Cardiac septum (tissue), 1 donor: ENCODE measurements at regions of chr15 and their contacts with region 1.

Region 1: DNA sequence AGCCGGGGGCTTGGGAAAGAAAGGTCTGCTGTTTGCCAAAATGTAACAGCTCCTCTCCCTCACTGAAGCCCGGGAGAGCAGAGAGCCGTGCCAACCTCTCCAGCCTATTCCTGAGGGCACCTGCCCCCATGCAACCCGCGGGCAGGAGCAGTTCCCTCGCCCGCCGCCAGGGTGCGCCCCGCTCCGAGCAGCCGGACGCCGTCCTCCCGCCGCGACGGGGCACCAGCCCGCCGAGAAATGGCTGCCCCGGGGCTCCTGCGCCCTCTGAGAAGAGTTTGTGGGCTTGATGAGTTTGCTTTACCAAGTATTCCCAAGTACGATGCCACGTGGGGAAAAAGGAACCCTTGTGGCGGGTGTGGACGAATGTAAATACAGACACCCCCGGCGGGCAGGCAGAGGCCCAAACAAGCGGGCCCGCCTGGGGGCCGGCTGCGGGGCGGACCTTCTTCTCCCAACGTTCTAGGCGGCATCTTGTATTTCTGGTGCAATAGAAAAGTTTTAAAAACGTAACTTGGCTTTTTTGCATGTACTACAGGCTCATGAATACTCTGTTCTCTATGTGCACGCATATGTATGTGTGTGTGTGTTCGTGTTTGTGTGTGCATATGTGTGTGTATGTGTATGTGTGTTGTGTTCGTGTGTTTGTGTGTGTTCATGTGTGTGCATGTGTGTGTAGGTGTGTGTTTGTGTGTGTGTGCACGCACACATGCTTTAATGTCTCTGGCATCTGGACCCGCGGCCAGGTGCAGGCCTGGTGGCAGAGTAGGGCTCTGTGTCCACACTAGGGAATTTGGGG is 162.9 kb downstream of the CHSY1 start:
- DNase-seq: peak; percentile 92

Region 2: DNA sequence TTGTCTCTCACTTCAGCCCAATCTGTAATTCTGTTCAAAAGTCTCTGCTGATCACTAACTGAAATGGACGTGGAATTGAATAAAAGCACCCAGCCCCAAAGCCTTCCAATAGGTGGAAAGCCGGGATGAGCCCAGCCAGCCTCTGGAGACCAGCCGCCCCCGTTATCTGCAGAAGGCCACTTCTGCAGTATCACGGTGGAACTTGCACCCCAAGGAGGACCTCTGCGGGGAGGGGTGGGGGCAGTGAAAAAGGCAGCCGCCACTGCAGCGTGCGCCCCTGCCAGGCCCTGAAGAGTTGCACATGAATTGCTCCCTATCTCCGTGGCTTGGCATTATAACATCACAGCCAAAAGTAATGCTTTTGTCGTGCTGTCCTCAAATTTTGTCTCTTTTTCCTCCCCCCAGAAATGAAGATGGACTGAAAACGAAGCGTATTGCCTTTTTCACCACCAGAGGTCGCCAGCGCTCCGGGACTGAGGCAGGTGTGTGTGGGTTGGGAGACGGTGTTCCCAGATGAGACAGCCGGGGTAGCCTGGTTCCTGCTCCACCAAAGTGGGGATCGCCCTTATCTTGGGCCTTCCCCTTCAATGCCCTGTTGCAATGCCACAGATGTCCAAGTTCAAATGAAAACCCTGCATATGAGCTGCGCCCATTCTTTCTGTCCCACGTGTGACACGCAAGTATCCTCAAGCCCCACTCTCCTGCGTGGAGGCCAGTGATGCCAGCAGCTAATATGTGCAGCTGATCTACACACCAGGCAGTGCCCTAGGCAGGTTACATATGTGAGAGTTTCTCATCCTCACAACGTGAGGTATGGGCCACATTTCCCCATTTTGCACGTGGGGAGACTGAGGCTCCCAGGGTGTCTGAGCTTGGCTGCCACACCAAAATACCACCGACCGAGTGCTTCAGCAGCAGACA is 73.8 kb before region 1 on chr15:
- intact Hi-C with region 1: loop called (anchors 5 kb)
- DNase-seq: peak; percentile 90

Region 3: GRCh38 chr15:101121511-101122090 is 32.6 kb after region 1 on chr15:
- intact Hi-C with region 1: loop called (anchors 2 kb)
- DNase-seq: peak; percentile 93

Region 4: DNA sequence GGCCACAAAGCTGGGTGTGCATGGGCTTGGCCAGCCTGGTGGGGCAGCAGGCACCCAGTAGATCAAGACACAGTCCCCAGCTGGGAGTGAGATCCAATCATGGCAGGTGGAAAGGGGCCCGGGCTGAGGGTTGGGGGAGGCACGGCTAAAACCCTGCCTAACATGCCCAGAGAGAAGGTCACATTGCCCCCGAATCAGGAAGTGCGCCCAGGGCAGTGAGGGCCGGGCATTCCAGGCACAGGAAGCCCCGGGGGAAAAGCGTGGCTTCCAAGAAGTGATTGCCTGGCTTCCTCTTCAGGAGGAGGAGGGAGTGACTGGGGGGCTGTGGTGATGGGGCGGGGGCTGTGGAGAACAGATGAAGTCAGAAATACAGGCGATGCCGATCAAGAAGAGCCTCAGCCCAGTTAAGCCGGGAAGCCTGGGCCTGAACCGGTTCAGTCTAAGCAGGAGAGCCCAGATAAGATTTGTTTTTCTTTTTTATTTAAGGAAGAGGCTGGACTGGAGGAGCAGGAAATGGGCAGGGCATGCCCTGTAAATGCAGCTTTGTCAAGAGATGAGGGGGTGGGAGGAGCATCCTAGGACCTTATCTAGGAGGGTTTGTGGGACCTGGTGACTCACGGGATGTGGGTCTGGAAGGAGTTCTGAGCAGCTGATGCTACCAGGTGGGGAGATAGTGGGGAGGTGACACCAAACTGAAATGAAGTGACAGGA is 78.9 kb after region 1 on chr15:
- intact Hi-C with region 1: loop called (anchors 5 kb)
- DNase-seq: peak; percentile 92

Region 5: GRCh38 chr15:101187820-101188636 is 99.0 kb after region 1 on chr15:
- intact Hi-C with region 1: no loop called
- DNase-seq: no peak

Region 6: GRCh38 chr15:101258238-101259144 is 169.5 kb after region 1 on chr15:
- intact Hi-C with region 1: loop called (anchors 1 kb)
- DNase-seq: no peak